ENCODE measurements at regions of chr4 and their contacts with region 1.

Region 1: DNA sequence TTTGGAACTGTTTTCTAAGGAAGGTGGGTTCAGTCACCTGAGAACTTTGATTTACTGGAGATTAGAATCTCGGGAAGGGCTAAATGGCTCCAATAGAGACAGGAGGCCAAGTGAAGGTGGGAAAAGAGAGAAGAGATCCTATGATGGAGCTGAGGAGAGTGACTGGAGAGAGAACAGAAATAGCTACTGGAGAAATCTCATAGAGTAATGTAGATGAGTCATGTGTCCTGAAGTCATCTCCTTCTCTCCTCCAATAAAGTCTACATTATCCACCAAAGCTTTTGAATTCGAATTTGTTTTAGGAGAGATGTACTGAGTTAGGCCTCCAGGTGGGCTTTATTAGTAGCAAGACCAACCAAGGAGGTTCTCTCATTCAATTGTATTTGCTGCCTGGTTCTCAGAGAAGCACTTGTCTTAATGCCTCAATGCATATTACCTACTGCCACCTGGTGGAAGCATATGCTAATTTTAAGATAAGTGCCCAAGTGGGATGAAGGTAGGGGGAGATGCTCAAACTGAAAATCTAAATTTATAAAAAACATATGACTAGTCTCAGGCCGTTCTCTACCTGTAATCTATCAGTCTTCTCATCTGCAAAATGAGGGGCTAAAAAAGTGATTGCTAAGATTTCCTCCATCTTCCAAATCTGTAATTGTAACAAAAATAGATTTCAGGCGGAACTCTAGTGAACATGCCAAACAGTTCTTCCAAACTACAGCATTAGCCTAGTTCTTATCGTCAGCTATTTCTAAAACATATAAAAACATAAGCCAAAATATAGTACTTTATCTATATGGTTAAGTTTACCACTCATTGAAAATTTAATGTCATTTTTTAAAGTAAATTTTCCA is 24.4 kb downstream of the TXK start:
- DNase-seq: no peak
- ATAC-seq: peak; percentile 62
- H3K4me3 Mint-ChIP-seq: no peak overlapping the region
- H3K27ac Mint-ChIP-seq: no peak overlapping the region
- H3K4me1 Mint-ChIP-seq: no peaks in the 10 kb centered on the region
- H3K27me3 Mint-ChIP-seq: no peaks in the 10 kb centered on the region
- CTCF ChIP-seq: peak; percentile 44

Region 2: DNA sequence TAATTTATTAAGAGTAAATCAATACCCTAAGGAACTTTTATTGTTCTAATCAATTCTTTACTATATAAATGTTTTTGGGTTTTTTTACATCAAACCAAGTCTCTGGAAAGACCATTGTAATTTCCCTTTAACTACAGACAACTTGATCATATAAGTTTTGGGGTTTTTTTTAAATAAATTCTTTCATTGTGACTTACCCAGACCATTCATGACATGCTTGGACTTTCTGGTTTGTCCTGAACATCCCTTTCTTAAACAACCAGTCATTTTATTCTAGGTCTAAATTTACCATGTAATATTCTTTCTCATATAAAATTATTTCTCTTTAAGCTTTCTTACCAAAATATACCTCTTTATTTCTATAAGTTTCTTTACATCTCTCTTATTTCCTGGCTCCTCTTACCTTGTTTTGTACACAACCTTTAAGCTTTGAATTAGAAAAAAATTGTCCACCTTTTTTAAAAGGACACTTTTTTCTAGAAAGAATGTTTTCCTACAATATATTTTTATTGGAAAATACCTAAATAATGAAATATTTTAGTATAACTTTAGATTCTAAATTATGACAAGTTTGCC is 101.5 kb before region 1 on chr4:
- CTCF ChIA-PET with region 1: no interaction called
- POLR2A ChIA-PET with region 1: no interaction called
- intact Hi-C with region 1: loop called (anchors 1 kb)
- DNase-seq: no peak
- ATAC-seq: no peak
- H3K4me3 Mint-ChIP-seq: no peak overlapping the region
- H3K27ac Mint-ChIP-seq: no peak overlapping the region
- H3K4me1 Mint-ChIP-seq: no peaks in the 10 kb centered on the region
- H3K27me3 Mint-ChIP-seq: peaks cover 19% of the 10 kb centered on the region
- CTCF ChIP-seq: no peak

Region 3: DNA sequence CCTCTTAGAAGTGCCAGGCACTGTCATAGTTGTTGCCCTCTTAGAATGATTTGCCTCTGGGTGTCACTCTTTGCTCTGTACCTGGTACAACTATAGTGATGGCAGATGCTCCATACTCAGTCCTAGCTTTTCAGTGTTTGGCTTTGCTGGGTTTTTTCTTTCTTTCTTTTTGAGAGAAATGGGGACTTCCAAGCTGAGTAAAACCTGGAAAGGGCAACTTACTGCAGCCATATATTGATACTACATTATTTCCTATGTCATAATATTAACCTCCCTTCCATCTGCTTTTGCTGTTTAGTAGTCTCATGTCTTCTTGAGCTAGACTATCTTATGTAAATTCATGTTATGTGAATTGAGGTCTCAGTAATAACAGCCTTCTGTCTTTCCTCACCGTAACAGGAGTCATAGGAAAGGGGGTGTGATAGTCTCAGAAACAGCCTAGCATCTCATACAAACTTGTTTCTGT is 44.0 kb before region 1 on chr4:
- CTCF ChIA-PET with region 1: no interaction called
- POLR2A ChIA-PET with region 1: no interaction called
- intact Hi-C with region 1: no loop called
- DNase-seq: no peak
- ATAC-seq: no peak
- H3K4me3 Mint-ChIP-seq: no peak overlapping the region
- H3K27ac Mint-ChIP-seq: no peak overlapping the region
- H3K4me1 Mint-ChIP-seq: no peaks in the 10 kb centered on the region
- H3K27me3 Mint-ChIP-seq: peaks cover 12% of the 10 kb centered on the region
- CTCF ChIP-seq: no peak

Measured in activated B cell treated with CpG ODN at 0.5 μM for 24 hours (primary cell).